Colonic mucosa (tissue), 4 donors: ENCODE measurements at regions of chr2 and their contacts with region 1.

Region 1: DNA sequence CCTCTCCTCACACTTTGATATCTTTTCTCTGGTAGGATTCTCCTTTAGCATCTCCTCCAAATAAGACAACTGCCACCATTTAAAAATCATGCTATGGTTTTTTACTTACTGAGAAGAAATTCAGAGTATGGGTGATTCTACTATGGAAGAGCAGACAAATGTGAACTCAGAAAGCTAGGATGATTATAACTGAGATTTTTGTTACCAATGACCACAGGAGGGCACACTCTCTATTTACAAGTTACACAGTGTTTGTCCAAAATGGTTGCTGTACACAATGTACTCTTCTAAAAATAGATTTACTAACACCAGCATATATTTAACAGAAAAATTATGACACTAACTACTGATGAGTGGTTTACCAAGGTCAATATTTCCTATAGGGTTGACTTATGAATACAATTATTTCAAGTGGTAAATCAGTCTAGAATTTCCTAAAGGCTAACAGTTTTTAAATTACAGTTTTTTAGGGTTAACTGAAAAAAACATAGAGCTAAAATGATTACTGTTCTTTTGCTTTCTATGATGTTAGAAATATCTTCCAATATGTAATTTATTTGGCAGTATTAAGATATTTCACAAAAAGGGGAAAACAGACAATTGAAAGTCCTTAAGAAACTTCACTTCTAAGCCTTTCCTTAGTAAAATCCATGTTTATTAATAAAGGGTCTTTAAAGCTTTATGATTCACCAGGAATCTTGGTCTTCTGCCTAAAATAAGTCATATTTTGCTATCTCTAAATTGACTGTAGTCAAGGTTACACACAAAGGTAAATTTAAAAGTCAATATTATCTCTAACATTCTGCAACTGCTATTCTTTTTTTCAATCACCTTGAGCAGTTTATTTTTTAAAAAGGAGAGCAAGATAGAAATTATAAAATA is 57.2 kb downstream of the MAP4K3 start:
- DNase-seq: no peak
- H3K4me3 ChIP-seq: no peak overlapping the region
- H3K27ac ChIP-seq: no peak overlapping the region
- H3K4me1 ChIP-seq: no peaks in the 10 kb centered on the region
- H3K27me3 ChIP-seq: no peaks in the 10 kb centered on the region
- CTCF ChIP-seq: peak; percentile 49

Region 2: GRCh38 chr2:38572167-38572566 is 807.7 kb before region 1 on chr2:
- intact Hi-C with region 1: no loop called
- DNase-seq: no peak
- H3K4me3 ChIP-seq: no peak overlapping the region
- H3K27ac ChIP-seq: no peak overlapping the region
- H3K4me1 ChIP-seq: no peaks in the 10 kb centered on the region
- H3K27me3 ChIP-seq: no peaks in the 10 kb centered on the region
- CTCF ChIP-seq: no peak

Region 3: DNA sequence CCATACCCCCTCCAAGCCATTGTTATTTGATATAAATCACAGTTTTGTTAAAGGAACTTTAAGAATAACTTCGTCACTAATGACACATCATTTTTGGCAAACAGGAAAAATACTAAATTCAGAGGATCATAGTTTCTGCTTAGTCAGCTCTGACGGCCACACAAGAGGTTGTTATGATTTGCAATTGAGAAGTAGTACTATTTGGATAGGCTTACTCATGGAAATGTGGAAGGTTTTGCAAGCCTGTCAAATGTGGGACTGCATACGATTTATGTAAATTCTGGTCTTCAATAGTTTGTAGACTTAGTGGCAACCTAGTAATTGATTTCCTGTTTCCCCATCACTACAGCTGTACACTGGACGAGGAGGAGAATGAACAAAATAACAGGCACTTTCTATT is 382.1 kb before region 1 on chr2:
- intact Hi-C with region 1: no loop called
- DNase-seq: no peak
- H3K4me3 ChIP-seq: no peak overlapping the region
- H3K27ac ChIP-seq: no peak overlapping the region
- H3K4me1 ChIP-seq: no peaks in the 10 kb centered on the region
- H3K27me3 ChIP-seq: no peaks in the 10 kb centered on the region
- CTCF ChIP-seq: no peak

Region 4: GRCh38 chr2:39227628-39228412 is 152.1 kb before region 1 on chr2:
- intact Hi-C with region 1: no loop called
- DNase-seq: peak; percentile 73
- H3K4me3 ChIP-seq: no peak overlapping the region
- H3K27ac ChIP-seq: no peak overlapping the region
- H3K4me1 ChIP-seq: no peaks in the 10 kb centered on the region
- H3K27me3 ChIP-seq: no peaks in the 10 kb centered on the region
- CTCF ChIP-seq: peak; percentile 87

Region 5: GRCh38 chr2:39313575-39313974 is 66.3 kb before region 1 on chr2:
- intact Hi-C with region 1: no loop called
- DNase-seq: no peak
- H3K4me3 ChIP-seq: no peak overlapping the region
- H3K27ac ChIP-seq: no peak overlapping the region
- H3K4me1 ChIP-seq: no peaks in the 10 kb centered on the region
- H3K27me3 ChIP-seq: no peaks in the 10 kb centered on the region
- CTCF ChIP-seq: no peak

Region 6: DNA sequence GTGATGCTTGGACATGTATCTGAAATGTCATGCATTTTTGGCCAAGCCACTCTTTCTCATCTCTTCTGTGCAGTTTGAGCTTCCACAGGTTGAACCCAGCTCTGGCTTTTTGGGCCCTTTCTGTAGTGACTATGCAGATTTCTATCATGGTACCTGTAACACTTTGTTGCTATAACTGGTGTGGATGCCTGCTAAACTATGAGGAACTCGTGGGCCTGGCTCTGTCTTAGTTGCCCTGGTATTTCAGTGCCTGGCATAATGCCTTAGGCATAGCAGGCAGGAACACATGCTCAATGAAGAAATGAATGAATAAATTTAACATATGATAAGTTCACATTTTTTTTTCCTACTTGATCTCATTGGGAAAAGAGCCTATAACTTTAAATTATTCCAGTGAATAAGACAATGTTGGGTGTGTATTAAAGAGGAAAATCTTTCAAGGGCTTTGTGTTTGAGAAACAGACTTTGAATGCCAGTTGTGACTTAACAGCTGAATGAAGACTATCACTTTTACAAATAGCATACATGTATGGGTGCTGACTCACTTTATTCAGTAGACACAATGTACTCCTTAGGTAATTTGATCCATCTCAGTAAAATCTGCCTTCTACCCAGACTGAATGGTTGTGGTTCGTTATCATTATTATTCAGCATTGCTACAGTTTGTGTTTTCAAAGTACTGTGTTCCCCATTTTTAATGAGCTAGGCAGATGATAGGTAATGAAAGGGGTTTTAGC is 143.6 kb after region 1 on chr2:
- intact Hi-C with region 1: loop called (anchors 10 kb)
- DNase-seq: no peak
- H3K4me3 ChIP-seq: no peak overlapping the region
- H3K27ac ChIP-seq: no peak overlapping the region
- H3K4me1 ChIP-seq: no peaks in the 10 kb centered on the region
- H3K27me3 ChIP-seq: no peaks in the 10 kb centered on the region
- CTCF ChIP-seq: no peak

Region 7: DNA sequence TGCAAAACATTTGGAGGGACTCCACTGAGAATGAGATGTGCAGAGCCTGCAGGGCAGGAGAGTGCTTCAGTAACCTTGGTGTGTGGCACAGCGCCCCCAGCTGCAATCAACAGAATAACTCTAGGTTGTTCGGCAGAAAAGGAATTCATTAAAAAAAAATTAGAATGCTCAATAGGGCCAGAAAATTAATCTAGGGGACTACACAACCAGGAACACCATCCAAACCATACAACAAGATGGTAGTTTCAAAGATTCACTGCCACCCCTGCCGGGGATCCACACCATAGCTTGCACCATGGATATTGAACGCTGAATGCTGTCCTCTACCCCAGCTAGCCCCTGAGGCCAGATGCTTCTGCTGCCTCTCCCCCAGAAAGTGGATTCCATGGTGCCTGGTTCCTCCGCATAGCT is 349.1 kb after region 1 on chr2:
- intact Hi-C with region 1: loop called (anchors 2 kb)
- DNase-seq: no peak
- H3K4me3 ChIP-seq: no peak overlapping the region
- H3K27ac ChIP-seq: no peak overlapping the region
- H3K4me1 ChIP-seq: no peaks in the 10 kb centered on the region
- H3K27me3 ChIP-seq: no peaks in the 10 kb centered on the region
- CTCF ChIP-seq: peak; percentile 59